CD8-positive, alpha-beta T cell (primary cell): ENCODE measurements at regions of chr7 and their contacts with region 1.

Region 1: DNA sequence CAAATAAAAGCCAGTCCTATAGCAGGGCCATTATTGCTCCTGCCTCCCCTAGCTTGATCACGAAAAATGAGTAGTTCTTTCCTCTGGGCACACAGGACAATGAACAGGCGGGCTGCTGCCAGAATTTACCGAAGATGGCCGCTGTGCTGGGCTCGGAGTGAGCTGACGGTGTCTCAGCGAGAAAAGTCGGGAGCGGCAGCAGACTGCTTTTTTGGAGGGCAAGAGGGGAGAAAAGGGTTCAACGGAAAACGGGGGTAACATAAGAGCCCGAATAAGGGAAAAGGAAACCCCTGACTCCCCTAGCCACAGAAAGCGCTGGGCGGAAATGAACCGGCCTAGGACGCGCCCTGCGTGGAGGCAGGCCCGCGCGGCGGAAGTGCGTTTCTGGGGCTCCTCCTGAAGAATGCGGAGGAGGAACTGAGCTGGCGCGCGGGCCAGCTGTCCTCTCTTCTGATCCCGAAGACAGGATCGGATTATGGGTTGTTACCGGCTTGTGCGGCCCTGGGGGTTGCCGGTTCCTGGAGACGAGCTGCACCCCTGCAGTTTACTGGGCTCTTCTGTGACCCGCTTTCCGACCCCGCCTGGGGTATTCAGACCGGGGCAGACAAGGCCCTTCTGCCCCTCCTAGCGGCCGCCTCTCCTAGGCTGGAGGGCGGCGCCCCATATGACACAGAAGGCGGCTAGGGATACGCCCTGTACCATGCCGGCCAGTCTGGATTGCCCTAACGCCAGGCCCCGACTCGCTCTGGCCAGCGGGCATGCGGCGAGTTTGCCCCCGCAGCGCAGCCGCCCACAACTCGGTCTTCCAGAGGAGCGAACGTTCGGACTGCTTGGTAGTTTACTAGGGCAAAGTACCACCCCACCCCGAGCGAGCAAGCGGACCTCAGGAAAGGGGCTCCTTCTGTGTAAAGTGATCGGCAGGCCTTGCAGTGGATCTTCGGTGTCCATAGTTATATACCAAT is 30.1 kb upstream of the KMT2E start:
- DNase-seq: peak; percentile 64 to 91 (median 85)
- ATAC-seq: peak; percentile 83
- H3K4me3 ChIP-seq: peak overlapping the region; percentile 67 to 85
- H3K4me3 Mint-ChIP-seq: peak overlapping the region; percentile 100
- H3K27ac ChIP-seq: peak overlapping the region; percentile 95
- H3K27ac Mint-ChIP-seq: peak overlapping the region; percentile 100
- H3K4me1 ChIP-seq: peaks cover 42% of the 10 kb centered on the region
- H3K4me1 Mint-ChIP-seq: peaks cover 55% of the 10 kb centered on the region
- H3K27me3 ChIP-seq: no peaks in the 10 kb centered on the region
- H3K27me3 Mint-ChIP-seq: no peaks in the 10 kb centered on the region
- CTCF ChIP-seq: peak; percentile 51

Region 2: GRCh38 chr7:104538152-104538551 is 445.7 kb before region 1 on chr7:
- CTCF ChIA-PET with region 1: no interaction called
- POLR2A ChIA-PET with region 1: no interaction called
- intact Hi-C with region 1: no loop called
- DNase-seq: no peak
- ATAC-seq: no peak
- H3K4me3 ChIP-seq: no peak overlapping the region
- H3K4me3 Mint-ChIP-seq: no peak overlapping the region
- H3K27ac ChIP-seq: no peak overlapping the region
- H3K27ac Mint-ChIP-seq: no peak overlapping the region
- H3K4me1 ChIP-seq: no peaks in the 10 kb centered on the region
- H3K4me1 Mint-ChIP-seq: no peaks in the 10 kb centered on the region
- H3K27me3 ChIP-seq: no peaks in the 10 kb centered on the region
- H3K27me3 Mint-ChIP-seq: peaks cover 4% of the 10 kb centered on the region
- CTCF ChIP-seq: no peak

Region 3: GRCh38 chr7:104883718-104884452 is 100.0 kb before region 1 on chr7:
- CTCF ChIA-PET with region 1: interaction called, 4 read pairs
- POLR2A ChIA-PET with region 1: no interaction called
- intact Hi-C with region 1: loop called in 1 of 2 experiments (anchors 5 kb)
- DNase-seq: peak; percentile 46 to 84 (median 77)
- ATAC-seq: peak; percentile 84
- H3K4me3 ChIP-seq: no peak overlapping the region
- H3K4me3 Mint-ChIP-seq: no peak overlapping the region
- H3K27ac ChIP-seq: no peak overlapping the region
- H3K27ac Mint-ChIP-seq: no peak overlapping the region
- H3K4me1 ChIP-seq: no peaks in the 10 kb centered on the region
- H3K4me1 Mint-ChIP-seq: peaks cover 5% of the 10 kb centered on the region
- H3K27me3 ChIP-seq: no peaks in the 10 kb centered on the region
- H3K27me3 Mint-ChIP-seq: no peaks in the 10 kb centered on the region
- CTCF ChIP-seq: peak; percentile 88

Region 4: GRCh38 chr7:104908636-104909035 is 75.2 kb before region 1 on chr7:
- CTCF ChIA-PET with region 1: no interaction called
- POLR2A ChIA-PET with region 1: no interaction called
- intact Hi-C with region 1: no loop called
- DNase-seq: no peak
- ATAC-seq: no peak
- H3K4me3 ChIP-seq: no peak overlapping the region
- H3K4me3 Mint-ChIP-seq: no peak overlapping the region
- H3K27ac ChIP-seq: no peak overlapping the region
- H3K27ac Mint-ChIP-seq: no peak overlapping the region
- H3K4me1 ChIP-seq: no peaks in the 10 kb centered on the region
- H3K4me1 Mint-ChIP-seq: no peaks in the 10 kb centered on the region
- H3K27me3 ChIP-seq: no peaks in the 10 kb centered on the region
- H3K27me3 Mint-ChIP-seq: peaks cover 10% of the 10 kb centered on the region
- CTCF ChIP-seq: no peak

Region 5: DNA sequence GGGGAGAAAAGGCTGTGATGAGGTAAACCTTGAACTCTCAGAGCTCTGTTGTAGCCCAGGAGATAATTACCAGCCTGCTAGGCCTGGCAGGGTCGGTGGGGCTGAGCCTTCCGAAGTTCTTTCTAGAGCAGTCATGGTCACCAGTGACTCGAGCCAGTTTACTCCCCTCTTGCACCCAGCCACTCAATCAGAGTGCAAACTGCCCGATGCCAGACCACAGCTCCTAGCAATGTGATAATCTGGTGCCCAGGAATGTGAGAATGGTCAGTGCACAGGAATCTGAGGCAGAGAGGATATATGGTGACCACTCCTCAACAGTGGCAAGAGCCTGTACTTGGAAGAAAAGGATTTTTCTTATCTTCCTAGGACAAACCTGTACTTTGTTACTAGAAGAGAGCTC is 16.3 kb before region 1 on chr7:
- CTCF ChIA-PET with region 1: interaction called, 16 read pairs
- POLR2A ChIA-PET with region 1: interaction called, 3 read pairs
- intact Hi-C with region 1: no loop called
- DNase-seq: no peak
- ATAC-seq: no peak
- H3K4me3 ChIP-seq: no peak overlapping the region
- H3K4me3 Mint-ChIP-seq: no peak overlapping the region
- H3K27ac ChIP-seq: no peak overlapping the region
- H3K27ac Mint-ChIP-seq: no peak overlapping the region
- H3K4me1 ChIP-seq: no peaks in the 10 kb centered on the region
- H3K4me1 Mint-ChIP-seq: no peaks in the 10 kb centered on the region
- H3K27me3 ChIP-seq: no peaks in the 10 kb centered on the region
- H3K27me3 Mint-ChIP-seq: no peaks in the 10 kb centered on the region
- CTCF ChIP-seq: no peak

Region 6: GRCh38 chr7:105036217-105037168 is 52.6 kb after region 1 on chr7:
- CTCF ChIA-PET with region 1: interaction called, 82 read pairs
- POLR2A ChIA-PET with region 1: interaction called, 6 read pairs
- intact Hi-C with region 1: loop called (anchors 1 kb)
- DNase-seq: no peak
- ATAC-seq: no peak
- H3K4me3 ChIP-seq: no peak overlapping the region
- H3K4me3 Mint-ChIP-seq: no peak overlapping the region
- H3K27ac ChIP-seq: peak overlapping the region in 1 of 2 experiments; percentile 18
- H3K27ac Mint-ChIP-seq: peak overlapping the region; percentile 25
- H3K4me1 ChIP-seq: peaks cover 42% of the 10 kb centered on the region
- H3K4me1 Mint-ChIP-seq: peaks cover 66% of the 10 kb centered on the region
- H3K27me3 ChIP-seq: no peaks in the 10 kb centered on the region
- H3K27me3 Mint-ChIP-seq: no peaks in the 10 kb centered on the region
- CTCF ChIP-seq: no peak

Region 7: GRCh38 chr7:105084581-105084980 is 100.7 kb after region 1 on chr7:
- CTCF ChIA-PET with region 1: interaction called, 12 read pairs
- POLR2A ChIA-PET with region 1: interaction called, 3 read pairs
- intact Hi-C with region 1: no loop called
- DNase-seq: no peak
- ATAC-seq: no peak
- H3K4me3 ChIP-seq: no peak overlapping the region
- H3K4me3 Mint-ChIP-seq: no peak overlapping the region
- H3K27ac ChIP-seq: no peak overlapping the region
- H3K27ac Mint-ChIP-seq: no peak overlapping the region
- H3K4me1 ChIP-seq: no peaks in the 10 kb centered on the region
- H3K4me1 Mint-ChIP-seq: peaks cover 27% of the 10 kb centered on the region
- H3K27me3 ChIP-seq: no peaks in the 10 kb centered on the region
- H3K27me3 Mint-ChIP-seq: no peaks in the 10 kb centered on the region
- CTCF ChIP-seq: no peak

Region 8: DNA sequence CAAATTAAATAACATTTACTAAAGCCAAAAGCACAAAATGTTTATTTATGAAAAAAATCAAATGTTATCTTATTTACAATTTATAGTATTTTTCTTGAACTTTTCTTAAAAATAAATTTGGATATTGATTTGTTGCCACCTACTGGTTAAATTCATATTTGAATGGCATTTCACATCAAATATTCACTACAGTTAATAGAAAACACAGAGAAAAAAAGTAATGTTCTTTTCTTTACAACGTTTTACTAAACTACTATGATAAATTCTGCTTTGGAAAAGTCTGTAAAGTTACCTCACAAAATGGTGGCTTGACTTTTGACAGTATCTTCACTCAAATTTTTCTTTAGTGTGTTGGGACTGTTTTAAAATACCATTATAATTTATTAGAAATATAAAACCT is 352.1 kb after region 1 on chr7:
- CTCF ChIA-PET with region 1: interaction called, 5 read pairs
- POLR2A ChIA-PET with region 1: no interaction called
- intact Hi-C with region 1: loop called (anchors 1 to 5 kb)
- DNase-seq: peak in 1 of 9 experiments; percentile 34
- ATAC-seq: no peak
- H3K4me3 ChIP-seq: no peak overlapping the region
- H3K4me3 Mint-ChIP-seq: no peak overlapping the region
- H3K27ac ChIP-seq: no peak overlapping the region
- H3K27ac Mint-ChIP-seq: no peak overlapping the region
- H3K4me1 ChIP-seq: no peaks in the 10 kb centered on the region
- H3K4me1 Mint-ChIP-seq: peaks cover 26% of the 10 kb centered on the region
- H3K27me3 ChIP-seq: no peaks in the 10 kb centered on the region
- H3K27me3 Mint-ChIP-seq: no peaks in the 10 kb centered on the region
- CTCF ChIP-seq: peak; percentile 84

Region 9: DNA sequence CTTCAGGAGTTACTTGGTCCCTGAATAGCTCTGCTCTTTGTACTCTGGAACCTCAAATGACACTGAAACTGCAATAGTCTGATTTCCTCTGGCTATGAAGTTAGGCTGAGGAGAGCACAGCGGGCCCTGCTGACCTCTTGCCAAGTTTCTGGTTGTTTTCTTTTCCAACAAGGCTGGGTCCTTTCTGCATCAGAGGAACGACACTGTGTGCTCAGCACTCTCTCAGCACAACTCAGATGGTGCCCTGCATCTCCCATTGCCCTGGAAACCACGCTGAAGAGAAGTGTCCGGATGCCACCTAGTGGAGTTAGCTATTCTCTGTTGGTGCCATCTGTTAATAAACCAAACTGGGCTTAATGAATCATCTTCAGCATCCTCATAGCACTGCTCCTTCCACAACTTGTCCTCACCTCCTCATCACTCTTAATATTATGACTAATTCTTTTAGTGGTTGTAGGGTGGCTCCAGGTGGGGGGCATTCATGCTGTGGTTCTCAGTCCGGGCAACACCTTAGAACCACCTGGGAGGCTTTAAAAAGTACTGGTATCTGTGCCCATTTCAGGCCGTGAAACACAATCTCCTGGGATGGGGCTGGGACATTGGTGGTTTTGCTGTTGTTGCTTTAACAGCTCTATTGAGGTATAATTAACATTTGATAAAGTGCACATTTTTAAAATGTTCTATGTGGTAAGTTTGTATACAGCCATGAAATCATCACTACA is 605.7 kb after region 1 on chr7:
- CTCF ChIA-PET with region 1: interaction called, 6 read pairs
- POLR2A ChIA-PET with region 1: no interaction called
- intact Hi-C with region 1: loop called in 1 of 2 experiments (anchors 5 kb)
- DNase-seq: peak; percentile 6 to 68 (median 44)
- ATAC-seq: peak; percentile 89
- H3K4me3 ChIP-seq: no peak overlapping the region
- H3K4me3 Mint-ChIP-seq: no peak overlapping the region
- H3K27ac ChIP-seq: no peak overlapping the region
- H3K27ac Mint-ChIP-seq: no peak overlapping the region
- H3K4me1 ChIP-seq: no peaks in the 10 kb centered on the region
- H3K4me1 Mint-ChIP-seq: peaks cover 11% of the 10 kb centered on the region
- H3K27me3 ChIP-seq: no peaks in the 10 kb centered on the region
- H3K27me3 Mint-ChIP-seq: no peaks in the 10 kb centered on the region
- CTCF ChIP-seq: peak; percentile 56